MCF 10A (cell line): ENCODE measurements at regions of chr2 and their contacts with region 1.

Region 1: GRCh38 chr2:70871398-70872211 is 36.0 kb upstream of the CD207 start:
- DNase-seq: peak; percentile 75
- H3K4me3 Mint-ChIP-seq: peak overlapping the region; percentile 18
- H3K27ac Mint-ChIP-seq: no peak overlapping the region
- H3K4me1 Mint-ChIP-seq: peaks cover 6% of the 10 kb centered on the region
- H3K27me3 Mint-ChIP-seq: peaks cover 34% of the 10 kb centered on the region
- CTCF ChIP-seq: peak; percentile 92

Region 2: DNA sequence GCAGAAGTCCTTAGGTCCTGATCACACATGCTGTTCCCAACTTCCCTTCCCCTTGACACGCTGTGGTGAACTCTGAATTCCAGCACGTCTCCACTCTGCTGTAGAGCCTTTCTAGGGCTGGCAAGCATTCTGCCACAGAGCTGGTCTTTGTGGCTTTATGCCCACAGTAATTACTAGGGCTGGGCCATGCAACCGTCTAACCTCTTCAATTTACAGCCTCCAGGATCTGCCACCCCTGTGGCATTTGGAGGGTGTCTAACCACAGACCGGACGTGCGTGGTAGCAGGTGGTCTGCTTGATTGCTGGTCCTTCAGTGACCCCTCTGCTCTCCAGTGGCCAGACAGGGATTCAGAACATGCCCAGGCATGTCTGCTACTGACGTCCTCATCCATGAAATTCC is 274.9 kb before region 1 on chr2:
- CTCF ChIA-PET with region 1: no interaction called
- POLR2A ChIA-PET with region 1: no interaction called
- intact Hi-C with region 1: no loop called
- DNase-seq: no peak
- H3K4me3 Mint-ChIP-seq: no peak overlapping the region
- H3K27ac Mint-ChIP-seq: peak overlapping the region; percentile 97
- H3K4me1 Mint-ChIP-seq: peaks cover 18% of the 10 kb centered on the region
- H3K27me3 Mint-ChIP-seq: no peaks in the 10 kb centered on the region
- CTCF ChIP-seq: no peak

Region 3: DNA sequence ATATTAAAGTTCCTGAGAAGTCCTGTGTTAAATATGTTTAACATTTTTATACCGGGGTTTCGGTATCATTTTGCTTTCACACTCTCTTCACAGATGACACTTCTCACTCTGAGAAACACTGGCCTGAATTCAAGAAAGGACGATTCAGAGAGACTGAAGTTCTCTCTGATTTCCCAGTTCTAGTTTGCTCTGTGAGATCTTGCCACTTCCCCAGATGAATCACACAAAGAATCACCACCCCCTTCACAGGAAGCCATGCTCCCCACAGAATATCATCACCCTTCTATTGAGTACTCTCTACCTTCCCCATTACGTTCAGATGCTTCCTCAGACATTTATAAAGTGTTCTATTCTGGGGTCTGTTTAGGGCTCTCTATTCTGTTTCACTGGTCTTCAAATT is 19.9 kb before region 1 on chr2:
- CTCF ChIA-PET with region 1: interaction called, 10 read pairs
- POLR2A ChIA-PET with region 1: no interaction called
- intact Hi-C with region 1: no loop called
- DNase-seq: no peak
- H3K4me3 Mint-ChIP-seq: no peak overlapping the region
- H3K27ac Mint-ChIP-seq: no peak overlapping the region
- H3K4me1 Mint-ChIP-seq: peaks cover 6% of the 10 kb centered on the region
- H3K27me3 Mint-ChIP-seq: peaks cover 24% of the 10 kb centered on the region
- CTCF ChIP-seq: no peak

Region 4: GRCh38 chr2:70907130-70908057 is 35.8 kb after region 1 on chr2:
- CTCF ChIA-PET with region 1: interaction called, 13 read pairs
- POLR2A ChIA-PET with region 1: no interaction called
- intact Hi-C with region 1: no loop called
- DNase-seq: no peak
- H3K4me3 Mint-ChIP-seq: no peak overlapping the region
- H3K27ac Mint-ChIP-seq: no peak overlapping the region
- H3K4me1 Mint-ChIP-seq: no peaks in the 10 kb centered on the region
- H3K27me3 Mint-ChIP-seq: peaks cover 49% of the 10 kb centered on the region
- CTCF ChIP-seq: no peak

Region 5: DNA sequence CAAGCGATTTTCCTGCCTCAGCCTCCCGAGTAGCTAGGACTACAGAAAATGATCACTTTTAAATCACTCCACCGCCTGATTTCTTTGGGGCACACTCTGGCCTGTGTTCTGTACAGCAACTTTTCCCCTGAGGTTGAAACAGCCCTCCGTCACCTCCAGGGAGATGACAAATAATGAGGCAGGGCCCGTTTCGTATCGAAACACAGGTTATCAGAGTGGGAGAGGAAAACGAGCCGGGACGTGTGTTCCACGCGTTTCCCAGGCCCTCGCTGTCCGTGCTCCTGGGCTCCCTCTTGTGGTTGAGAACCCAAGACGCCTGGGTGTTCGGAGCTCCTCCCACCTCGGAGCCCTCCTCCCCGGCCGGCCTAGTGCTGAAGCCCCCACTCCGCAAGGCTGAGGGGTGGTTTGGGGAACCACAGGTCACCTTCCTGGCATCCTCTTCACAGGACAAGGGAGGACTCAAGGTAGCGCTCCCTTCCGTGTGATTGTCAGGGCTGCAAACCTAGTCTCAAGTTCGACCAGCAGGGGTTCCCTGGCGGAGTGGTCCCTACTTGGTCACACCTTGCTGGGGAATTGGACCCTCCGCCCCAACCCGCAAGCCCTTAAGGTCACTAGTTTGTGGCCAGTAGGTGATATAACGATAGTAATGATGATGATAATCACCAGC is 76.9 kb after region 1 on chr2:
- CTCF ChIA-PET with region 1: interaction called, 113 read pairs
- POLR2A ChIA-PET with region 1: interaction called, 6 read pairs
- intact Hi-C with region 1: loop called (anchors 1 kb)
- DNase-seq: peak; percentile 84
- H3K4me3 Mint-ChIP-seq: peak overlapping the region; percentile 70
- H3K27ac Mint-ChIP-seq: peak overlapping the region; percentile 60
- H3K4me1 Mint-ChIP-seq: peaks cover 20% of the 10 kb centered on the region
- H3K27me3 Mint-ChIP-seq: peaks cover 7% of the 10 kb centered on the region
- CTCF ChIP-seq: peak; percentile 81

Region 6: DNA sequence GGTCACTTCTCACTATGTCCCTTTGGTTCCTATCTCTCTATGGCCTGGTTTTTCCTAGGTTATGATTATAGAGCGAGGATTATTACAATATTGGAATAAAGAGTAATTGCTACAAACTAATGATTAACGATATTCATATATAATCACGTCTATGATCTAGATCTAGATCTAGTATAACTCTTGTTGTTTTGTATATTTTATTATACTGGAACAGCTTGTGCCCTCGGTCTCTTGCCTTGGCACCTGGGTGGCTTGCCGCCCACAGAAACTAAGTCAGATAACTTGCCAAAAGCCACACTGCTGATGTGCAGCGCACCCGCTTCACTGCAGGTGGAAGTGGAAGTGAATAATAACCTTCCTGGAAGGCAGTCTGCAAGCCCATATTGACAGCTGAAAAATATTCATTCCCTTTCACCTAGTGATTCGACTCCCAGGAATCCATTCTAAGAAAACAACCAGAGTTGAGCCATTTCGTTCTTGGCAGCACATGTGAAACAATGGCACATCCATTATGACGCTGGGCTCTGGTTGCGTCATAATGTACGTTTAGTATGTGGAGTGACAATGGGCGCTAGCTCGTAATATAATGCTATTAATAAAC is 106.1 kb after region 1 on chr2:
- CTCF ChIA-PET with region 1: interaction called, 3 read pairs
- POLR2A ChIA-PET with region 1: no interaction called
- intact Hi-C with region 1: loop called (anchors 1 kb)
- DNase-seq: peak; percentile 81
- H3K4me3 Mint-ChIP-seq: peak overlapping the region; percentile 68
- H3K27ac Mint-ChIP-seq: peak overlapping the region; percentile 82
- H3K4me1 Mint-ChIP-seq: peaks cover 17% of the 10 kb centered on the region
- H3K27me3 Mint-ChIP-seq: peaks cover 25% of the 10 kb centered on the region
- CTCF ChIP-seq: no peak